Dorsolateral prefrontal cortex (tissue), 120 donors: ENCODE measurements at regions of chr13 and their contacts with region 1.

Region 1: GRCh38 chr13:36919833-36920615 is at the start of gene SMAD9:
- DNase-seq: peak; percentile 10 to 84 (median 62)
- H3K4me3 ChIP-seq: peak within 1 kb of the TSS; percentile 36 to 82 (median 66)
- H3K27ac ChIP-seq: peak within 1 kb of the TSS in 53 of 59 donors; percentile 20 to 87 (median 69)
- H3K27me3 ChIP-seq: no peaks in the 10 kb centered on the region
- CTCF ChIP-seq: no peak
- total RNA-seq, gene SMAD9: 6.2 to 41.0 (median 17.2) TPM

Region 2: GRCh38 chr13:36848199-36848982 is 71.6 kb before region 1 on chr13:
- intact Hi-C with region 1: no loop called
- DNase-seq: no peak
- H3K4me3 ChIP-seq: no peak overlapping the region
- H3K27ac ChIP-seq: no peak overlapping the region
- H3K27me3 ChIP-seq: no peaks in the 10 kb centered on the region
- CTCF ChIP-seq: peak in 39 of 56 donors; percentile 3 to 54 (median 33)

Region 3: GRCh38 chr13:36872621-36873020 is 47.4 kb before region 1 on chr13:
- intact Hi-C with region 1: loop called in 1 of 2 experiments (anchors 5 kb)
- DNase-seq: peak in 8 of 10 donors; percentile 5 to 74 (median 54)
- H3K4me3 ChIP-seq: peak overlapping the region in 30 of 59 donors; percentile 1 to 47 (median 19)
- H3K27ac ChIP-seq: peak overlapping the region in 14 of 59 donors; percentile 1 to 65 (median 40)
- H3K27me3 ChIP-seq: no peaks in the 10 kb centered on the region
- CTCF ChIP-seq: peak in 29 of 56 donors; percentile 12 to 65 (median 29)

Region 4: GRCh38 chr13:37194428-37194861 is 274.4 kb after region 1 on chr13:
- intact Hi-C with region 1: no loop called
- DNase-seq: no peak
- H3K4me3 ChIP-seq: no peak overlapping the region
- H3K27ac ChIP-seq: no peak overlapping the region
- H3K27me3 ChIP-seq: no peaks in the 10 kb centered on the region
- CTCF ChIP-seq: no peak